ENCODE measurements at regions of chr12 and their contacts with region 1.

Region 1: GRCh38 chr12:16350682-16351081 is 3.2 kb downstream of the MGST1 start:
- DNase-seq: peak; percentile 68
- H3K4me3 Mint-ChIP-seq: peak overlapping the region; percentile 81
- H3K27ac Mint-ChIP-seq: peak overlapping the region; percentile 77
- H3K4me1 Mint-ChIP-seq: peaks cover 53% of the 10 kb centered on the region
- H3K27me3 Mint-ChIP-seq: no peaks in the 10 kb centered on the region
- CTCF ChIP-seq: no peak

Region 2: DNA sequence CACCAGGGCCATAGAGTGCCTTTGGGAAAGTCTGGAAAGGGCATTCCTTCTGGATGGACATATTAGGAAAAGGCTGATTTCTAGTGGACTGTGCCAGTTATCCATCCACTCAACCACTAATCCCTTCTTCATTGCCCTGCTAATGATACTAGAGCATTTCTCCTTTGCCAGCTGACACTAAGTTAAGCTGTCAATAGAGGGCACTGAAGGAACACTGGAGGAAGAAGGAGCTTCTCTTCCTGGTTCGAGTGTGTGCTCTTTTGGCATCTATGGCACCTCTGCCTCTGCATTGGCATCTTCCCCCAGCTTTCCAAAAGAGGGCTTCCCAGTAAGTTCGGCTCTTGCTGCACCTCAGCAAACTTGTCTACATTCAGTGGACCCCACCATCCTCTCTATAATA is 274.1 kb before region 1 on chr12:
- CTCF ChIA-PET with region 1: no interaction called
- intact Hi-C with region 1: loop called (anchors 5 kb)
- DNase-seq: peak; percentile 34
- H3K4me3 Mint-ChIP-seq: no peak overlapping the region
- H3K27ac Mint-ChIP-seq: no peak overlapping the region
- H3K4me1 Mint-ChIP-seq: no peaks in the 10 kb centered on the region
- H3K27me3 Mint-ChIP-seq: no peaks in the 10 kb centered on the region
- CTCF ChIP-seq: peak; percentile 38

Measured in Calu3 (cell line).